Breast epithelium (tissue), 4 donors: ENCODE measurements at regions of chr1 and their contacts with region 1.

Region 1: GRCh38 chr1:101745551-101746270 is 251.0 kb downstream of the OLFM3 start:
- DNase-seq: no peak
- H3K4me3 ChIP-seq: no peak overlapping the region
- H3K27ac ChIP-seq: no peak overlapping the region
- H3K4me1 ChIP-seq: no peaks in the 10 kb centered on the region
- H3K27me3 ChIP-seq: no peaks in the 10 kb centered on the region
- CTCF ChIP-seq: no peak
- POLR2A ChIP-seq: no peak

Region 2: GRCh38 chr1:101929343-101929742 is 183.6 kb after region 1 on chr1:
- intact Hi-C with region 1: no loop called
- DNase-seq: no peak
- H3K4me3 ChIP-seq: no peak overlapping the region
- H3K27ac ChIP-seq: no peak overlapping the region
- H3K4me1 ChIP-seq: no peaks in the 10 kb centered on the region
- H3K27me3 ChIP-seq: no peaks in the 10 kb centered on the region
- CTCF ChIP-seq: no peak
- POLR2A ChIP-seq: no peak

Region 3: GRCh38 chr1:103106426-103107341 is 1361.0 kb after region 1 on chr1:
- intact Hi-C with region 1: loop called (anchors 5 kb)
- DNase-seq: no peak
- H3K4me3 ChIP-seq: peak overlapping the region; percentile 37 to 62 (median 47)
- H3K27ac ChIP-seq: peak overlapping the region in 1 of 2 donors; percentile 4
- H3K4me1 ChIP-seq: no peaks in the 10 kb centered on the region
- H3K27me3 ChIP-seq: peaks cover 0 to 4% of the 10 kb centered on the region in 2 donors
- CTCF ChIP-seq: peak in 2 of 3 donors; percentile 28 to 56
- POLR2A ChIP-seq: no peak